OCI-LY7 (cell line): ENCODE measurements at regions of chr14 and their contacts with region 1.

Region 1: DNA sequence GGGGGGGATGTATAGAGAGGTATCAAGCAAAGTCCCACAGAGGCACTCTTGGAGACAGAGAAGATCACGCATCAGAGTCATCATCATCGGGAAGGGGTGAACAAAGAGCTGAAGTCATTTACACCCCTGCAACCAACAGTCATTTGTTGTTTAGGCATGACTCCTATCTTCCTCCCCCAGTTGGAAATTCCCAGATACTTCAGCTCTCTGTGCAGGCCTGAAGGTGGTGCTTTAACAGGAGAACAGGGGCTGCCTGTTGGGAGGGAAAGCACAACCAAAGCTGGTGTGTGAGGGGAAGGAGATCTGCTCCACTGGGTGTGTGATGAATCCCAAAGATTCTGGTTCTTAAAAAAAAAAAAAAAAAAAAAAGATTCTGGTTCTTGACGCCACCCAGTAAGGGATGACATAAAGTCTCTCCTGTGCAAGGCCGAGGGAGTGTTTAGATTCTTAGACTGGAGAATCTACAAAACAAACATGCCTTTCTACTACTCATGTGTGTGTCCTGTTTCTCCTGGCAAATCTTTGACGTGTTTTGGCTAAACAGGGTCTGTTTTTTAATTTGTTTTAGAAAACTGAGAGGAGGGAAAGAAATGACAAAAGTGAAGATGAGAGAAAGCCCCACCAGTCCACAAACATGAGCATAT is 121.0 kb upstream of the ARHGAP5 start:
- DNase-seq: no peak
- H3K4me3 ChIP-seq: no peak overlapping the region
- H3K27ac ChIP-seq: no peak overlapping the region
- H3K4me1 ChIP-seq: no peaks in the 10 kb centered on the region
- CTCF ChIP-seq: no peak

Region 2: DNA sequence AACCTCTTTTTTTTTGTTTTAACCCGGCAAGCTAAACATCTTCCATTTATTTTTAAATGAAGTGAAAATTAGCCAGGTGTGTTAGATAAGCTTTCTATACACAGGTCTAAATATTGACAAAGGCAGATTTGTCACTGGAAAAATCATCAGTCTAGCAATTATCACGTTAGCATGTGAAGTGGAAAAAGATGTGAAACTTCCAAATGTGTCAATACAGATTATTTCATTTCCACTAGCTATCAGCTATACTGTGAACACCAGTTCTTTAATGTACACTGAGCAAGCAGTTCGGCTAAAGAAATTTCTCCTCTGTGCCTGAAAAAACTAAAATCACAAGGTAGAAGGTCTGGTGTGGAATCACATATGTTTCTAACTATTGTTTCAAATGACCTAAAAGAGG is 1493.7 kb before region 1 on chr14:
- CTCF ChIA-PET with region 1: no interaction called
- POLR2A ChIA-PET with region 1: interaction called, 12 read pairs
- intact Hi-C with region 1: no loop called
- DNase-seq: no peak
- H3K4me3 ChIP-seq: no peak overlapping the region
- H3K27ac ChIP-seq: no peak overlapping the region
- H3K4me1 ChIP-seq: no peaks in the 10 kb centered on the region
- CTCF ChIP-seq: no peak

Region 3: GRCh38 chr14:31934767-31935266 is 21.2 kb before region 1 on chr14:
- CTCF ChIA-PET with region 1: no interaction called
- POLR2A ChIA-PET with region 1: no interaction called
- intact Hi-C with region 1: no loop called
- DNase-seq: no peak
- H3K4me3 ChIP-seq: no peak overlapping the region
- H3K27ac ChIP-seq: no peak overlapping the region
- H3K4me1 ChIP-seq: no peaks in the 10 kb centered on the region
- CTCF ChIP-seq: 0 out of 2 replicates have a peak, but pooled peaks have one; percentile 28